Breast epithelium (tissue), 4 donors: ENCODE measurements at regions of chr9 and their contacts with region 1.

Region 1: GRCh38 chr9:123611226-123611625 is 255.2 kb downstream of the CRB2 start:
- DNase-seq: no peak
- H3K4me3 ChIP-seq: no peak overlapping the region
- H3K27ac ChIP-seq: no peak overlapping the region
- H3K4me1 ChIP-seq: no peaks in the 10 kb centered on the region
- H3K27me3 ChIP-seq: no peaks in the 10 kb centered on the region
- CTCF ChIP-seq: no peak
- POLR2A ChIP-seq: no peak

Region 2: DNA sequence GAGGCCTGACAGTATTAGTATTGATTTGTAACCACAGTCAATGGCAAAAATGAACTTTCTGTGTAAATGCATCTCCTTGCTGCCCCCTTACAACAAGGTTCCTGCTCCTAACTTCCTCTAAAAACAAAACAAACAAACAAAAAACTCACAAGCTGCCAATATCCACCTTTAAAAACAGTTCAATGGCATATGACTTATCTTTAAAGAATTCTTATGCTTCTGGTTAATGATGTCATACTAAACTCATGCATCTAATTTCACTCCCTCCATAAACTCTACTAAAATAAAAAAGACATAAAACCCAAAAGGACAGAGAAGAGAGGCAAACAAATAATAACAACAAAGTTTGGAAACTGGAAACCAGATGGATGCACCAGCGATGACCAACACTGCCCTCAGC is 1075.1 kb before region 1 on chr9:
- intact Hi-C with region 1: loop called (anchors 10 kb)
- DNase-seq: no peak
- H3K4me3 ChIP-seq: no peak overlapping the region
- H3K27ac ChIP-seq: no peak overlapping the region
- H3K4me1 ChIP-seq: no peaks in the 10 kb centered on the region
- H3K27me3 ChIP-seq: no peaks in the 10 kb centered on the region
- CTCF ChIP-seq: no peak
- POLR2A ChIP-seq: no peak

Region 3: GRCh38 chr9:123651273-123651672 is 40.0 kb after region 1 on chr9:
- intact Hi-C with region 1: no loop called
- DNase-seq: no peak
- H3K4me3 ChIP-seq: no peak overlapping the region
- H3K27ac ChIP-seq: no peak overlapping the region
- H3K4me1 ChIP-seq: no peaks in the 10 kb centered on the region
- H3K27me3 ChIP-seq: no peaks in the 10 kb centered on the region
- CTCF ChIP-seq: no peak
- POLR2A ChIP-seq: no peak

Region 4: GRCh38 chr9:124503713-124504529 is 892.7 kb after region 1 on chr9:
- intact Hi-C with region 1: loop called (anchors 10 kb)
- DNase-seq: no peak
- H3K4me3 ChIP-seq: peak overlapping the region in 2 of 3 donors; percentile 33 to 56
- H3K27ac ChIP-seq: no peak overlapping the region
- H3K4me1 ChIP-seq: peaks cover 0 to 5% of the 10 kb centered on the region in 2 donors
- H3K27me3 ChIP-seq: peaks cover 6 to 52% of the 10 kb centered on the region in 2 donors
- CTCF ChIP-seq: no peak
- POLR2A ChIP-seq: no peak